ENCODE measurements at regions of chr1 and their contacts with region 1.

Region 1: DNA sequence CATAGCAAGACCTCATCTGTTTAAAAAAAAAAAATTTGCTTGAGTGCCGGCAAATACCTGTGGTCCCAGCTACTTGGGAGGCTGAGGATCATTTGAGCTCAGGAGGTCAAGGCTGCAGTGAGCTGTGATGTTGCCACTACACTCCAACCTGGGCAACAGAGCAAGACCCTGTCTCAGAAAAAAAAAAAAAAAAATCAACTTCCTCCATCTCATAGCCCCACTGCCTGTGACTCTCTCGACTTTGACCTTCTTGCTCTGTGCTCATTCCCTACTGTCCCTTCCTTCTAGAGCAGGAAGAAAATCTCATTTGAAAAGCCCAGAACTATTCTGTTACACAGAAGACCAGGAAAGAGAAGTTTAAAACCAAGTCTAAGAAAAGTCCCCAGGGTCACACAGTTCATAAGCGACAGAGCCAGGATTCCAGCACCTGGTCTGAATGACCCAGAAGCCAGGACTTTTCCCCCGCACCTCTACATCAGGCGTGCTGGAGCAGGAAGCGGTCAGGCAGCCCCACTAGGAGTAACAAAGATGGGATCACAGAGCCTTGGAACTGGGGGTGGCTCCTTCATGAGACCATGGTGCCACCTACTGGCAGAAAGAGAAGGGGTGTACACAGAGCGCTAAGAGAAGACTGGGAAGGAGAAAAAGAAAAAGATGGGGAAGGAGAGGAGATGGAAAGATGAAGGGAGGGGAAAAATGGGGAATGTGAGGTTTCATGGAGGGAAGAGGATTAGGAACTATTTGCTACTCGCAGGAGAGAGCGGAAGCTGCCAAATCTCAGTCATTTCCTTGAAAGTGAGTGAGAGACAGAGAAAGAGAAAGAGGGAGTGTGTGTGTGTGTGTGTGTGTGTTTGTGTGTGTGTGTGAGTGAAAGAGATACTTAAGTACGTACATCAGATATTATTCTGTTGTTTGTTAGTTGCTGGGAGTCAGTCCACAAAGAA is 3.1 kb upstream of the P3R3URF start:
- DNase-seq: peak; percentile 89
- ATAC-seq: peak; percentile 49
- H3K4me3 ChIP-seq: no peak overlapping the region
- H3K27ac ChIP-seq: peak overlapping the region; percentile 99
- H3K4me1 ChIP-seq: peaks cover 49% of the 10 kb centered on the region
- H3K27me3 ChIP-seq: no peaks in the 10 kb centered on the region
- CTCF ChIP-seq: peak; percentile 96

Region 2: GRCh38 chr1:46036894-46037839 is 142.2 kb before region 1 on chr1:
- CTCF ChIA-PET with region 1: interaction called, 13 read pairs
- POLR2A ChIA-PET with region 1: interaction called, 4 read pairs
- intact Hi-C with region 1: loop called (anchors 1 kb)
- DNase-seq: peak; percentile 91
- ATAC-seq: peak; percentile 57
- H3K4me3 ChIP-seq: no peak overlapping the region
- H3K27ac ChIP-seq: no peak overlapping the region
- H3K4me1 ChIP-seq: peaks cover 17% of the 10 kb centered on the region
- H3K27me3 ChIP-seq: no peaks in the 10 kb centered on the region
- CTCF ChIP-seq: peak; percentile 98

Region 3: DNA sequence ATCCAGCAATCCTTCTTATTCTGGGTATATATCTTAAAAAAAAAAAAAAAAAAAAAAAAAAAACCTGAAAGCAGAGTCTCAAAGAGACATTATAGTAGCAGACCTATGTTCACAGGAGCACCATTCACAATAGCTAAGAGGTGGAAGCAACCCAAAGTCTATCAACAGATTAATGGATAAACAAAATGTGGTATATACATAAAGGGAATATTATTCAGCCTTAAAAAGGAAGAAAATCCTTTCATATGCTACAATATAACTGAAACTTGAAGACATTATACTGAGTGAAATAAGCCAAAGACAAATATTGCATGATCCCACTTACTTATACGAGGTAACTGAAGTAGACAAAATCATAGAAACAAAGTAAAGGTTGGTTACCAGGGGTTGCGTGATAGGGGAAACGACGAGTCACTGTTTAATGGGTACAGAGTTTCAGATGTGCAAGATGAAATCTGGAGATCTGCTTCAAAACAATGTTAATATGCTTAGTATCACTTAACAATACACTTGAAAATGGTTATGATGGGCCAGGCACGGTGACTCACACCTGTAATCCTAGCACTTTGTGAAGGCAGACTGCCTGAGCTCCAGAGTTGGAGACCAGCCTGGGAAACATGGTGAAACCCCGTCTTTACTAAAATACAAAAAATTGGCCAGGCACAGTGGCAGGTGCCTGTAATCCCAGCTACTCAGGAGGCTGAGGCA is 76.5 kb before region 1 on chr1:
- CTCF ChIA-PET with region 1: no interaction called
- POLR2A ChIA-PET with region 1: no interaction called
- intact Hi-C with region 1: loop called (anchors 2 kb)
- DNase-seq: peak; percentile 75
- ATAC-seq: peak; percentile 94
- H3K4me3 ChIP-seq: no peak overlapping the region
- H3K27ac ChIP-seq: peak overlapping the region; percentile 81
- H3K4me1 ChIP-seq: peaks cover 7% of the 10 kb centered on the region; the same call in 1 of the 2 replicates
- H3K27me3 ChIP-seq: no peaks in the 10 kb centered on the region
- CTCF ChIP-seq: no peak

Region 4: GRCh38 chr1:46132529-46133180 is 46.8 kb before region 1 on chr1 and contains the start of gene PIK3R3:
- CTCF ChIA-PET with region 1: interaction called, 4 read pairs
- POLR2A ChIA-PET with region 1: interaction called, 5 read pairs
- intact Hi-C with region 1: loop called (anchors 2 kb)
- DNase-seq: peak; percentile 98
- ATAC-seq: peak; percentile 86
- H3K4me3 ChIP-seq: peak within 1 kb of the TSS; percentile 95
- H3K27ac ChIP-seq: peak within 1 kb of the TSS; percentile 94
- H3K4me1 ChIP-seq: peaks cover 49% of the 10 kb centered on the region
- H3K27me3 ChIP-seq: no peaks in the 10 kb centered on the region
- CTCF ChIP-seq: no peak
- total RNA-seq, gene PIK3R3: 17.7 and 18.5 TPM in 2 replicates

Region 5: DNA sequence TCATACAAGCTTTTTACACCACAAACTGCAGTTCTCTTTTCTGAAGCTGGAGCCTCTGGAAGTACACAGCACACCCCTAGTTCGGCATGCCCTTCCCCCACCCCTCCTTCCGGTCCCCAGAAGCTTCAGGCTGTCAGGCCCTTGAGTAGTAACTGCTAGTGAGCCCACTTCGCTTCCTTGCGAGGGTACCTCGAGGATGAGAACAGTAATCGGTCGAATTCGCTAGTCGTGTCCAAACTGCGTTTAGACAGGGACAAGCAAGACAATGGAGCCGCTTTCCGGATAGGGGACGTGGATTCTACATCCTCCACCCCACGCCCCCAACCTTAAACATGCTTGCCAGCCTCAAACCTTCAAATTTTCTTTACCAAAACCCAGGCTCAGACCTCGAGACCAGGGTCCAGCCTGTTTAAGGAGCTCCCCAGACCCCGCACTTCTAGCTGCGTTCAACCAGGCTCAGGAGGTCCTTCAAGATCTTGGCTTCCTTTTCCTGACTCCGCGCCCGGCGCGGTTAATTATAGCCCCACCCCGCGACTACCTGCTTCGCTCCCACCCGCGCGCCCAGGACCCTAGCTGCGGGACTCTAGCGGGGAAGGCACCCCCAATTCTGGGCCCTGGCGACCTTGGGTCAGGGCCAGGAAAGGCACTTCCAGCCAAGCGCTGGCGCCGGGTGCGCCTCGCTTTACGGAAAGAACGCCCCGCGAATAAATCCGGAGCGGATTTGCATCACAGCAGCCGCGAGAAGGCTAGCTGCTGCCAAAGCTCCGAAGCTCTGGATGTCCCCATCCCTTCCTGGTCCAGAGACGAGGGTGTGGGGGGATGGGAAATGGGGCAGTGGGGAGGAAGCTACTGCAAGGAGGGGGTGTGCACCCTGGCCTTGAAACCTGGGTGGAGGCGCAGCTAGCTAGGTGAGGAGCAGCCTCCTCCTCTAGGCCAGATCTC is 12.6 kb before region 1 on chr1:
- CTCF ChIA-PET with region 1: no interaction called
- POLR2A ChIA-PET with region 1: no interaction called
- intact Hi-C with region 1: no loop called
- DNase-seq: no peak
- ATAC-seq: no peak
- H3K4me3 ChIP-seq: no peak overlapping the region
- H3K27ac ChIP-seq: no peak overlapping the region
- H3K4me1 ChIP-seq: peaks cover 10% of the 10 kb centered on the region
- H3K27me3 ChIP-seq: no peaks in the 10 kb centered on the region
- CTCF ChIP-seq: no peak

Region 6: GRCh38 chr1:46197964-46198811 is 18.8 kb after region 1 on chr1 and contains the start of gene POMGNT1:
- CTCF ChIA-PET with region 1: interaction called, 7 read pairs
- POLR2A ChIA-PET with region 1: interaction called, 3 read pairs
- intact Hi-C with region 1: loop called (anchors 1 kb)
- DNase-seq: peak; percentile 65
- ATAC-seq: peak; percentile 90
- H3K4me3 ChIP-seq: peak within 1 kb of the TSS; percentile 95
- H3K27ac ChIP-seq: peak within 1 kb of the TSS; percentile 72
- H3K4me1 ChIP-seq: peaks cover 9% of the 10 kb centered on the region
- H3K27me3 ChIP-seq: no peaks in the 10 kb centered on the region
- CTCF ChIP-seq: peak; percentile 51; the same call in 1 of the 2 replicates
- total RNA-seq, gene POMGNT1: 84.8 and 92.5 TPM in 2 replicates

Measured in PC-3 (cell line).